ENCODE measurements at regions of chr7 and their contacts with region 1.

Region 1: DNA sequence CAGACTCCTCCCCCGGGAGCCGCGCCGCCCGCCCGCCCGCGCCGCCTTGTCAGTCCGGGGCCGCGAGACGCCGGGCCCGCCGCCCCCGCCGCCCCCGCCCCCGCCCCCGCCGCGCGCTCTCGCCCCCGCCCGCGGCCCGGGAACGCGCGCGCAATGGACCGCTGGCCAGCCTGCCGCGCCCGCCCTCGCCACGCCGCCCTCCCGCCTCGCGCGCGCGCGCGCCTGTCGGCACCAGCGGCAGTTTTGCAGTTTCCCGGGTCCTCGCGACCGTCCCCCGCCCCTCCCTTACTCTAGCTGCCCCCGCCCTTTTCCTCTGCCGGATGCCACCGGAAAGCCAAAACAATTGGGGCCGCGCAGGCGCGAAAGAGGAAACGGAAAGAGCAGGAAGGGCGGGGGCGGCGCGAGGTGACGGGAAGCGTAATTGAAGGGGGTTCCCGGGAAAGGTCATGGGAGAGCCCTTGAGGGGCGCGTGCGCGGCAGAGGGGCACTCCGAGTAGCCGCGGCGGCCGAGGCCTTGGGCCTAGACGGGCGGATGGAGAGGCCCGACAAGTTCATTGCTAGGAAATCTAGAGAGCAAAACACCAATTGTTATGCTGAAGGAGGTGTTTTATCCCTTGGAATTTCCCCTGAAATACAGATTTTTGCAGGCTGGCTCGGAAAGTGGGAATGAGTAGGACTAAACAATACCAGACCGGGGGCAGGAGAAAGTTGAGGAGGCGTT is 400 bp upstream of the KBTBD2 start:
- DNase-seq: peak; percentile 96
- H3K4me3 ChIP-seq: peak overlapping the region in 2 of 3 experiments; percentile 68 to 90
- H3K27ac ChIP-seq: peak overlapping the region; percentile 99
- H3K4me1 ChIP-seq: peaks cover 46% of the 10 kb centered on the region
- H3K27me3 ChIP-seq: no peaks in the 10 kb centered on the region
- CTCF ChIP-seq: no peak
- POLR2A ChIP-seq: no peak

Region 2: GRCh38 chr7:32490127-32490822 is 401.7 kb before region 1 on chr7 and contains the start of gene LSM5:
- CTCF ChIA-PET with region 1: no interaction called
- POLR2A ChIA-PET with region 1: no interaction called
- dilution Hi-C with region 1: no loop called
- intact Hi-C with region 1: loop called (anchors 1 kb)
- DNase-seq: peak; percentile 94
- H3K4me3 ChIP-seq: peak within 1 kb of the TSS; percentile 38 to 86 (median 73)
- H3K27ac ChIP-seq: peak within 1 kb of the TSS; percentile 34
- H3K4me1 ChIP-seq: peaks cover 11% of the 10 kb centered on the region
- H3K27me3 ChIP-seq: no peaks in the 10 kb centered on the region
- CTCF ChIP-seq: no peak
- POLR2A ChIP-seq: peak; percentile 84
- total RNA-seq, gene LSM5: 63.3 and 68.1 TPM in 2 replicates

Region 3: DNA sequence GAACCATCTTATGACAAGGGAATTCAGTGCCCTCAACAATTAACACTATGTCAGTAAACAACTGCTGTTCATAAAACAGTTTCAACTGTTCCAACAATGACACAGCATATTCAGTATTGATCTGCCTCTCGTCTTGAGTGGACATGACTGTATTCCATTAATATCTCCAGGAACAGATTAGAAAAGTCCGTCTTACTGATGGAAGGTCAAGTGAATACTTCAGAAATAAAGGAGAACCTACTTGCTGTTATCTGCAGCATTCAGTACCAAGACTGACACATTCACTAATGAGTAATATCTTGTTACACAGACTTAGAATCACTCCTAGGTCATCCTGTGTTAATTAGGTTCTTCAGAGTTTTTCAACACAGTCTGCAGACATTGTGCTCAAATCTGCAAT is 12.5 kb before region 1 on chr7:
- CTCF ChIA-PET with region 1: no interaction called
- POLR2A ChIA-PET with region 1: no interaction called
- dilution Hi-C with region 1: no loop called
- intact Hi-C with region 1: no loop called
- DNase-seq: peak; percentile 59
- H3K4me3 ChIP-seq: no peak overlapping the region
- H3K27ac ChIP-seq: no peak overlapping the region
- H3K4me1 ChIP-seq: peaks cover 23% of the 10 kb centered on the region
- H3K27me3 ChIP-seq: no peaks in the 10 kb centered on the region
- CTCF ChIP-seq: no peak
- POLR2A ChIP-seq: no peak

Region 4: GRCh38 chr7:32905175-32905662 is 13.3 kb after region 1 on chr7:
- CTCF ChIA-PET with region 1: interaction called, 7 read pairs
- POLR2A ChIA-PET with region 1: interaction called, 4 read pairs
- dilution Hi-C with region 1: no loop called
- intact Hi-C with region 1: loop called (anchors 1 kb)
- DNase-seq: peak; percentile 86
- H3K4me3 ChIP-seq: peak overlapping the region in 2 of 3 experiments; percentile 2 to 31
- H3K27ac ChIP-seq: peak overlapping the region; percentile 23
- H3K4me1 ChIP-seq: peaks cover 3% of the 10 kb centered on the region
- H3K27me3 ChIP-seq: no peaks in the 10 kb centered on the region
- CTCF ChIP-seq: no peak
- POLR2A ChIP-seq: no peak

Region 5: DNA sequence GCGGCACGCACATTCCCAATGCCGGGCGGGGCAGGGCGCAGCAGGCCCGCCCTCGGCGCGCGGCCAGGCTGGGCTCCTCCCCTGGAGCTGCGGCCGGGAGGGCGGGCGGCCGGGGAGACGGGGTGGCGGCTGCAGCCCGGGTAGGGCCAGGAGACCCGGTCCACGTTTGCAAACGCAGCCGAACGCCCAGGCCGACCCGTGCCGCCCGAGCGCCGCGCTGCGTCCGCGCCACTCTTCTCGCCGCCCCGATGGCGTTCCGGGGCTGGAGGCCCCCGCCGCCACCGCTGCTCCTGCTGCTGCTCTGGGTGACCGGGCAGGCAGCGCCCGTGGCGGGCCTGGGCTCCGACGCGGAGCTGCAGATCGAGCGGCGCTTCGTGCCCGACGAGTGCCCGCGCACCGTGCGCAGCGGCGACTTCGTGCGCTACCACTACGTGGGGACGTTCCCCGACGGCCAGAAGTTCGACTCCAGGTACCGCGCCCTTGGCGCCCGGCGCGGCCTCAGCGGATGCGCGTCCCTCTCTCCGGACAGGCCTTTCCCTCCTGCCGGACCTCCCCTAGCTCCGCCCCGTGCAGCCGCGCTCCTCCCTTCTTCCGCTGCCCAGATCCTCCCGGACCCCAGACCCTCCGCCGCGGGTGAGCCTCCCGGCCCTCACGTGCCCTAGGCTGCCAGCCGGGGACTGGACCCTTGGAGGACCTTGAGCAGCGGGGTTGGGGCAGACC is 65.5 kb after region 1 on chr7 and contains the start of gene FKBP9:
- CTCF ChIA-PET with region 1: no interaction called
- POLR2A ChIA-PET with region 1: no interaction called
- dilution Hi-C with region 1: no loop called
- intact Hi-C with region 1: loop called (anchors 1 kb)
- DNase-seq: peak; percentile 82
- H3K4me3 ChIP-seq: peak within 1 kb of the TSS; percentile 50 to 89 (median 73)
- H3K27ac ChIP-seq: peak within 1 kb of the TSS; percentile 78
- H3K4me1 ChIP-seq: peaks cover 10% of the 10 kb centered on the region
- H3K27me3 ChIP-seq: no peaks in the 10 kb centered on the region
- CTCF ChIP-seq: no peak
- POLR2A ChIP-seq: peak; percentile 92
- total RNA-seq, gene FKBP9: 112 and 124 TPM in 2 replicates

Region 6: GRCh38 chr7:33062782-33063443 is 171.0 kb after region 1 on chr7:
- CTCF ChIA-PET with region 1: no interaction called
- POLR2A ChIA-PET with region 1: no interaction called
- dilution Hi-C with region 1: no loop called
- intact Hi-C with region 1: loop called (anchors 1 kb)
- DNase-seq: peak; percentile 96
- H3K4me3 ChIP-seq: peak overlapping the region; percentile 56 to 87 (median 81)
- H3K27ac ChIP-seq: peak overlapping the region; percentile 81
- H3K4me1 ChIP-seq: peaks cover 15% of the 10 kb centered on the region
- H3K27me3 ChIP-seq: no peaks in the 10 kb centered on the region
- CTCF ChIP-seq: no peak
- POLR2A ChIP-seq: peak; percentile 52

Measured in endothelial cell of umbilical vein (primary cell).